Heart left ventricle (tissue), 16 donors: ENCODE measurements at regions of chr9 and their contacts with region 1.

Region 1: DNA sequence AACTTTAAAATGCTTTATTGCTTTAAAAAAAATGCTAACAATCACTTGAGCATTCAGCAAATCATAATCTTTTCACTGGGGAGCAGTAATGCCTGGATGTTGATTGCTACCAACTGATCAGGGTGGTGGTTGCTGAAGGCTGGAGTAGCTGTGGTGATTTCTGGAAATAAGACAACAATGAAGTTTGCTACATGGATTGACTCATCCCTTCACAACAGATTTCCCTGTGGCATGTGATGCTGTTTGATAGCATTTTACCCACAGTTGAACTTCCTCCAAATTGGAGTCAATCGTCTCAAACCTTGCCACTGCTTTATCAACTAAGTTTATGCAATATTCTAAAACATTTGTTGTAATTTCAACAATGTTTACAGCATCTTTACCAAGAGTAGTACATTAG is 83.3 kb downstream of the MLLT3 start:
- DNase-seq: no peak
- ATAC-seq: no peak
- H3K4me3 ChIP-seq: no peak overlapping the region
- H3K27ac ChIP-seq: no peak overlapping the region
- H3K4me1 ChIP-seq: peaks cover 0 to 3% (median 0%) of the 10 kb centered on the region in 12 donors
- H3K27me3 ChIP-seq: no peaks in the 10 kb centered on the region
- CTCF ChIP-seq: no peak
- POLR2A ChIP-seq: no peak

Region 2: DNA sequence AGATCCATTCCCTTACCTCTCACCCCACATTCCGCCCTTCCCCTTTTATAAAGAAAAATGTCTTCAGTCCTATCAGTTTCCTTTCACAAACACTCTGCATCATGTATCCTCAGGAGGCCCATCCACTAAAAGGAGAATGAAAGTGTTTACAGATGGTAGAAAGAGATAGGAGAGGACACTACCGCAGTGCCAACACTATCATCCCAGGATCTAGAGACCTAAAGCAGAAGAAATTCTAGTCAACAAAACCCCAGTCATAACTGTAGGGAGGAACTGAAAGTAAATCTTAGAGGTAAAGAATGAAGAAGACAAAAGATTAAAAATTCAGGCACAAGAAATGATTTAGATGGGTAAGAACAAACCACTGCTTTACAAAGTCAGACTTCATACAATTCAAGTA is 30.7 kb before region 1 on chr9:
- intact Hi-C with region 1: loop called in 1 of 10 experiments (anchors 2 kb)
- DNase-seq: no peak
- ATAC-seq: no peak
- H3K4me3 ChIP-seq: no peak overlapping the region
- H3K27ac ChIP-seq: peak overlapping the region in 1 of 12 donors; percentile 4
- H3K4me1 ChIP-seq: peaks cover 0 to 43% (median 24%) of the 10 kb centered on the region in 12 donors
- H3K27me3 ChIP-seq: no peaks in the 10 kb centered on the region
- CTCF ChIP-seq: no peak
- POLR2A ChIP-seq: no peak